Activated T-helper 1 cell treated with anti-CD3 and anti-CD28 coated beads, Interleukin-12 subunit alpha, Interleukin-12 subunit beta, Interleukin-2, Interleukin-4 antibody, amounts not matched to agents 30 ng/mL and 10 ng/mL and 1 ng/mL, durations not matched to agents 14 hours and 24 hours and 36 hours (primary cell): ENCODE measurements at regions of chr2 and their contacts with region 1.

Region 1: DNA sequence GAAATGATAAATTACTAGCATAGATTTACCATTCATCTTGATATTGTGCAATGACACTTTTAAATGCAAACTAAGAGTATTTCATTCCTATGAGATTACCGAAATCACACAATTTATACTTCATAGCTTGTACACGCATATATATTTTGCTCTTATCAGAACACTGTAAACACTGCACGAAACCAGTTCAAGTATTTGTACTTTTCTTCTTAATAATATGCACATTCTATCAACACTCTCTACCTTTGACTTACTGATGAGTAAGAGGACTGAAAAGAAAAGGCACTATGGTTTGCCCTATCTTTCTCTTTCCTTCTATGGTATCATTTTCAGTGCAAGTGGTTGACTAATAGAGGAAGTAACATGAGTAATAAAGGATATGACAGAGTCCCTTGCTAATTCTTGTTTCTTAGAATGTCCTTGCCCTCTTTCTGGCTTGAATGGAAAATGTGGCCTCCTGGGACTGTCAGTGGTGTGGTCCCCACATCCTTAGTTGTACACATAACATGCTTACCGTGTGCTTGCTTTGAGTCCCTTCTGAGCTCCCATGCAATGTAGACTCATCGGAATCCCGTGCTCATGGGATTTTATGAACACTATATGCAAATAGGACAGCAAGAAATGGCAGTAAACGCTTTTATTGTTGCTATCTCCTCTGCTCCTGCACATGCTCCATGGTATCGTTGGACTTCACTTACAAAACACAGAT is 363.5 kb upstream of the TNP1 start:
- DNase-seq: peak; percentile 56
- H3K4me3 Mint-ChIP-seq: peak overlapping the region; percentile 9
- H3K27ac Mint-ChIP-seq: peak overlapping the region; percentile 93
- H3K4me1 Mint-ChIP-seq: peaks cover 49% of the 10 kb centered on the region
- H3K27me3 Mint-ChIP-seq: peaks cover 10% of the 10 kb centered on the region

Region 2: DNA sequence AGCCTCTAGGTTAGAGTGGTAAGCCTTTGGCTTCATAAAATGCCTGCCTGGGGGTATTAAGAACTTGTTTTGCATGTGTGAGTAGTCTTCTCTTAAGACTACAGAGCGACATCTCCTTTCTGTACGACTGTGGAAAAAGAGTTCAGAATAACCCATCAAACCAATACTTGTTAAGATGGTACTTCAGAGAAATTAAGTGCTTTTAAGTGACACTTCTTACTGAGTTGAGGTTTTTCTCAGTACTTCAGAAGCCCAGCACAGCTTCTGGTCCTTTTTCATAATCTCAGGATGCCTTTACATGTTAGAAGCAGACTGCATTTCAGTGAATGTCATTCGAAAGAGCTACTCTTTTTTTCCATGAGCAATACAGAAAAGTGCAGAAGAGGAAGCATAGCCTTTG is 1103.4 kb before region 1 on chr2:
- intact Hi-C with region 1: loop called (anchors 2 kb)
- DNase-seq: no peak
- H3K4me3 Mint-ChIP-seq: peak overlapping the region; percentile 78
- H3K27ac Mint-ChIP-seq: peak overlapping the region; percentile 95
- H3K4me1 Mint-ChIP-seq: peaks cover 78% of the 10 kb centered on the region
- H3K27me3 Mint-ChIP-seq: no peaks in the 10 kb centered on the region

Region 3: DNA sequence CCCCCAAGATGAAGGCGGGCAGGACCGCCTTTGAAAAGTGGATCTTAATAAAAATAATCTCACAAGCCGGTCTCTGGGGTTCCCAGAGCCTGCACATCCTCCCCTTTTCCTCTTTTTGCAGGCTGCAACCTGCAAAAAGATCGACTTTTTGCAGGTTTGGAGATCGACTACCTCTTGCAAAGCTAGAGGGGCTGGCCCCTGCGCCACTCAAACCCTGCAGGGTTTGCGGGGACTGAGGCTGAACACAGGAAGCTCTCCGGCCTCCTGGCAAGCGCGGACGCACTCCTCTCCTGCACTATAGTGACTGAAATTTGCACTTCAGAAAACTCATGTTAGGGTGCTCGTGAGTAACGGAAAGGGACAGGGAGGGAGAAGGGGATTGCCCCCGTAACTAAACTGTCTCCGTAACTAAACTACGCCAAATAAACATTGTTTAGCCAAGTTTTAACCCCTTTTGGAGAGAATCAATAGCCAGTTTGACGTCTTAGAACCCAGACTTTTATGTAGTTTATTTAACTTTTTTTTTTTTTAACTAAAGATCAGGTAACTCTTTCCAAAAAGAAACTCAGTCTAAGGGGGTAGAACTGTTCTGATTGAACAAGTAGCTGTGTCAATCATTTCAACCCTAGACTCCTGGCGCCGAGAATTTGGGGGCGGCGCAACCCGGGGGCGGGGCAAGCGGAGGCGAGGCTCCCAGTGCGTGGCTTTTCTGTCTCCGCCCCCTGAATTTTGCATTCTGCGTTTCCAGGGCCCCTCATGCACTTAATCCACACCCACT is 530.6 kb before region 1 on chr2:
- intact Hi-C with region 1: loop called (anchors 1 kb)
- DNase-seq: peak; percentile 60
- H3K4me3 Mint-ChIP-seq: peak overlapping the region; percentile 86
- H3K27ac Mint-ChIP-seq: peak overlapping the region; percentile 81
- H3K4me1 Mint-ChIP-seq: peaks cover 27% of the 10 kb centered on the region
- H3K27me3 Mint-ChIP-seq: peaks cover 71% of the 10 kb centered on the region

Region 4: DNA sequence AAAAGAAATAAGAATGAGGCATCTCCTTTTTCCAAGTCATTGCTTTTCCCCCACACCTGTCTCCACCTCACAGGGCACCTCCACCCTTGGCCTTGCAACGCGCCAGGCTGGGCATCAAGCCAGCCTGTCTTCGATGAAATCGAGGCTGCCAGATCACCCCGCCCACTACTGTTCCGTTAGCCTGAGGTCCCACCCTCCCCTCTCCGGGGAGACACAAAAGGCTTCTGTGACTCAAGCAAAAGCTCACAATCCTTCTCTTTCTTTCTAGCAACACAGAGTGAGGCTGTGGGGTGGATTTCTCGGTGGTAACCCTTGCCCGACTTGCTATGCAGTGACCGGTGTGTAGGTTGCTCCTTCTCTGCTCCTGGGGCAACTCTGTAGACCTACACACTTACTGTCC is 373.4 kb before region 1 on chr2:
- intact Hi-C with region 1: loop called (anchors 1 kb)
- DNase-seq: peak; percentile 6
- H3K4me3 Mint-ChIP-seq: peak overlapping the region; percentile 57
- H3K27ac Mint-ChIP-seq: peak overlapping the region; percentile 68
- H3K4me1 Mint-ChIP-seq: peaks cover 21% of the 10 kb centered on the region
- H3K27me3 Mint-ChIP-seq: peaks cover 8% of the 10 kb centered on the region

Region 5: GRCh38 chr2:217090024-217090473 is 133.3 kb before region 1 on chr2:
- intact Hi-C with region 1: loop called (anchors 1 kb)
- DNase-seq: no peak
- H3K4me3 Mint-ChIP-seq: peak overlapping the region; percentile 45
- H3K27ac Mint-ChIP-seq: peak overlapping the region; percentile 72
- H3K4me1 Mint-ChIP-seq: peaks cover 50% of the 10 kb centered on the region
- H3K27me3 Mint-ChIP-seq: no peaks in the 10 kb centered on the region

Region 6: GRCh38 chr2:217415316-217415715 is 191.9 kb after region 1 on chr2:
- intact Hi-C with region 1: no loop called
- DNase-seq: no peak
- H3K4me3 Mint-ChIP-seq: no peak overlapping the region
- H3K27ac Mint-ChIP-seq: no peak overlapping the region
- H3K4me1 Mint-ChIP-seq: no peaks in the 10 kb centered on the region
- H3K27me3 Mint-ChIP-seq: no peaks in the 10 kb centered on the region

Region 7: GRCh38 chr2:217610401-217611075 is 387.2 kb after region 1 on chr2:
- intact Hi-C with region 1: loop called (anchors 2 kb)
- DNase-seq: peak; percentile 28
- H3K4me3 Mint-ChIP-seq: peak overlapping the region; percentile 8
- H3K27ac Mint-ChIP-seq: peak overlapping the region; percentile 77
- H3K4me1 Mint-ChIP-seq: peaks cover 25% of the 10 kb centered on the region
- H3K27me3 Mint-ChIP-seq: no peaks in the 10 kb centered on the region

Region 8: DNA sequence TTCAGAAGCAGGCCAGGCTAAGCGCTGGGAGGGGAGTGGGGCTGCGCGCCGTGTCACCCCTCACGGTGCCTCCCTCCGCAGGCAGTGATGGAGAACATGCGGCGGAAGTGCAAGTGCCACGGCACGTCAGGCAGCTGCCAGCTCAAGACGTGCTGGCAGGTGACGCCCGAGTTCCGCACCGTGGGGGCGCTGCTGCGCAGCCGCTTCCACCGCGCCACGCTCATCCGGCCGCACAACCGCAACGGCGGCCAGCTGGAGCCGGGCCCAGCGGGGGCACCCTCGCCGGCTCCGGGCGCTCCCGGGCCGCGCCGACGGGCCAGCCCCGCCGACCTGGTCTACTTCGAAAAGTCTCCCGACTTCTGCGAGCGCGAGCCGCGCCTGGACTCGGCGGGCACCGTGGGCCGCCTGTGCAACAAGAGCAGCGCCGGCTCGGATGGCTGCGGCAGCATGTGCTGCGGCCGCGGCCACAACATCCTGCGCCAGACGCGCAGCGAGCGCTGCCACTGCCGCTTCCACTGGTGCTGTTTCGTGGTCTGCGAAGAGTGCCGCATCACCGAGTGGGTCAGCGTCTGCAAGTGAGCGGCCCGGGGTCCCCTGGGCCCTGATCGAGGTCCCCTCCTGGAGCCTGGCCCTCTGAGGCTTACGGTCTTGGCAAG is 1669.4 kb after region 1 on chr2:
- intact Hi-C with region 1: loop called (anchors 10 kb)
- DNase-seq: peak; percentile 72
- H3K4me3 Mint-ChIP-seq: peak overlapping the region; percentile 15
- H3K27ac Mint-ChIP-seq: peak overlapping the region; percentile 81
- H3K4me1 Mint-ChIP-seq: peaks cover 35% of the 10 kb centered on the region
- H3K27me3 Mint-ChIP-seq: peaks cover 59% of the 10 kb centered on the region